Activated CD4-positive, alpha-beta T cell treated with anti-CD3 and anti-CD28 coated beads for 36 hours (primary cell): ENCODE measurements at regions of chr1 and their contacts with region 1.

Region 1: GRCh38 chr1:241611063-241611462 is 29.1 kb downstream of the CHML start:
- DNase-seq: no peak
- ATAC-seq: peak; percentile 71
- H3K4me3 Mint-ChIP-seq: no peak overlapping the region
- H3K27ac Mint-ChIP-seq: no peak overlapping the region
- H3K4me1 Mint-ChIP-seq: peaks cover 14% of the 10 kb centered on the region
- H3K27me3 Mint-ChIP-seq: no peaks in the 10 kb centered on the region

Region 2: GRCh38 chr1:241627453-241628259 is 16.6 kb after region 1 on chr1:
- CTCF ChIA-PET with region 1: interaction called, 34 read pairs
- POLR2A ChIA-PET with region 1: no interaction called
- intact Hi-C with region 1: loop called (anchors 1 kb)
- DNase-seq: peak; percentile 58
- ATAC-seq: peak; percentile 89
- H3K4me3 Mint-ChIP-seq: peak overlapping the region; percentile 1
- H3K27ac Mint-ChIP-seq: peak overlapping the region; percentile 44
- H3K4me1 Mint-ChIP-seq: peaks cover 22% of the 10 kb centered on the region
- H3K27me3 Mint-ChIP-seq: no peaks in the 10 kb centered on the region

Region 3: DNA sequence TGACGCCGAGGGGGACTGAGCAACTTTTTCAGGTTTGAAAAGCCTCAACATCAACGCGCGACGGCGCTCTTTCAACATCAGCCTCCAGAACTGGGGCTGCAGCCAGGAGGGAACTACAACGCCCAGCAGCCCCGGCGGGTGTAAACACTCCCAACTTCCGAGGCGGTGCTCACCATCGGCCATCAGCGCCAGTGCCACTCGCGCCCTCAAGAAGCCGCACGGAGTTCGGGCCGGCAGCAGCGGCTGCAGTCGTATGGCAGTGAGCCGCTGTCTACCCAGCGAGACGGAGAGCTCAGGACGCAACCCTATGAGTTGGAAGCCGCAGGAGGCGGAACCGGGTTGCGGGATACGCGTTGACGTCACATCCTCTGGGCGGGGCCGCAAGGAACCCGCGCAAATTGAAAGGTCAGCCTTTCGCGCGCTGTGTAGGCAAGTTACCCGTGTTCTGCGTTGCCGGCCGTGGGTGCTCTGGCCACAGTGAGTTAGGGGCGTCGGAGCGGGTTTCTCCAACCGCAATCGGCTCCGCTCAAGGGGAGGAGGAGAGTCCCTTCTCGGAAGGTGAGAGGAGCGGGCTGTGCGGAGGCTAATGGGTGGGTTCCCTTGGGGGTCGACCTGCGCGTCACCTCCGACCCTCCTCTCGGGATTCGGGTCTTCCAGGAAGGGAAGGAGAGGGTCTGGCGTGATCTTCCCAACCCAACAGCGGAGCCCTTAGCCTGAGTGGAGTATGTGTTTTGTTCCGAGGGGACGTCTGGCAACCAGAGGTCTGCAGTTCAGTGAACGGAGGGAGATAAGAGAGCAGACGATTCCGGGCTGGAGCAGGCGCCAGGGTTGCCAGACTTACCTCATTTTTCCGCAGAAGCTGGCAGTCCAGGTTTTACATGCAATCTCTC is 237.0 kb after region 1 on chr1 and contains the start of gene EXO1:
- CTCF ChIA-PET with region 1: interaction called, 8 read pairs
- POLR2A ChIA-PET with region 1: no interaction called
- intact Hi-C with region 1: loop called (anchors 1 to 5 kb)
- DNase-seq: peak; percentile 95
- ATAC-seq: peak; percentile 97
- H3K4me3 Mint-ChIP-seq: peak within 1 kb of the TSS; percentile 99
- H3K27ac Mint-ChIP-seq: peak within 1 kb of the TSS; percentile 99
- H3K4me1 Mint-ChIP-seq: peaks cover 14% of the 10 kb centered on the region
- H3K27me3 Mint-ChIP-seq: no peaks in the 10 kb centered on the region
- total RNA-seq, gene EXO1: 53.8 to 57.8 TPM

Region 4: GRCh38 chr1:241998412-241998921 is 387.4 kb after region 1 on chr1:
- CTCF ChIA-PET with region 1: interaction called, 8 read pairs
- POLR2A ChIA-PET with region 1: no interaction called
- intact Hi-C with region 1: loop called (anchors 1 kb)
- DNase-seq: peak; percentile 74
- ATAC-seq: peak; percentile 78
- H3K4me3 Mint-ChIP-seq: peak overlapping the region; percentile 35
- H3K27ac Mint-ChIP-seq: no peak overlapping the region
- H3K4me1 Mint-ChIP-seq: peaks cover 4% of the 10 kb centered on the region
- H3K27me3 Mint-ChIP-seq: peaks cover 4% of the 10 kb centered on the region